IMR-90 (cell line): ENCODE measurements at regions of chr20 and their contacts with region 1.

Region 1: GRCh38 chr20:8267009-8267408 is 134.9 kb downstream of the PLCB1 start:
- DNase-seq: no peak
- ATAC-seq: no peak
- H3K4me3 ChIP-seq: no peak overlapping the region
- H3K27ac ChIP-seq: no peak overlapping the region
- H3K4me1 ChIP-seq: no peaks in the 10 kb centered on the region
- H3K27me3 ChIP-seq: no peaks in the 10 kb centered on the region
- CTCF ChIP-seq: no peak
- POLR2A ChIP-seq: no peak
- RAD21 ChIP-seq: no peak

Region 2: GRCh38 chr20:8234580-8234979 is 32.4 kb before region 1 on chr20:
- CTCF ChIA-PET with region 1: no interaction called
- POLR2A ChIA-PET with region 1: no interaction called
- dilution Hi-C with region 1: no loop called
- in situ Hi-C with region 1: no loop called
- intact Hi-C with region 1: loop called (anchors 5 kb)
- DNase-seq: no peak
- ATAC-seq: no peak
- H3K4me3 ChIP-seq: no peak overlapping the region
- H3K27ac ChIP-seq: no peak overlapping the region
- H3K4me1 ChIP-seq: no peaks in the 10 kb centered on the region
- H3K27me3 ChIP-seq: no peaks in the 10 kb centered on the region
- CTCF ChIP-seq: no peak
- POLR2A ChIP-seq: no peak
- RAD21 ChIP-seq: no peak

Region 3: GRCh38 chr20:8901237-8902025 is 634.4 kb after region 1 on chr20:
- CTCF ChIA-PET with region 1: no interaction called
- POLR2A ChIA-PET with region 1: no interaction called
- dilution Hi-C with region 1: no loop called
- in situ Hi-C with region 1: no loop called
- intact Hi-C with region 1: no loop called
- DNase-seq: no peak
- ATAC-seq: no peak
- H3K4me3 ChIP-seq: no peak overlapping the region
- H3K27ac ChIP-seq: no peak overlapping the region
- H3K4me1 ChIP-seq: no peaks in the 10 kb centered on the region; the same call in 1 of the 2 replicates
- H3K27me3 ChIP-seq: no peaks in the 10 kb centered on the region
- CTCF ChIP-seq: no peak
- POLR2A ChIP-seq: no peak
- RAD21 ChIP-seq: no peak